Activated naive CD8-positive, alpha-beta T cell treated with anti-CD3 and anti-CD28 coated beads, Interleukin-2, amount 10 ng/mL, durations not matched to agents 7 days and 5 days (primary cell): ENCODE measurements at regions of chr11 and their contacts with region 1.

Region 1: GRCh38 chr11:121464352-121464946 is 11.7 kb upstream of the SORL1-AS1 start:
- DNase-seq: peak; percentile 79
- ATAC-seq: peak; percentile 76
- H3K4me3 Mint-ChIP-seq: peak overlapping the region; percentile 87
- H3K27ac Mint-ChIP-seq: peak overlapping the region; percentile 88
- H3K4me1 Mint-ChIP-seq: peaks cover 88% of the 10 kb centered on the region
- H3K27me3 Mint-ChIP-seq: no peaks in the 10 kb centered on the region

Region 2: DNA sequence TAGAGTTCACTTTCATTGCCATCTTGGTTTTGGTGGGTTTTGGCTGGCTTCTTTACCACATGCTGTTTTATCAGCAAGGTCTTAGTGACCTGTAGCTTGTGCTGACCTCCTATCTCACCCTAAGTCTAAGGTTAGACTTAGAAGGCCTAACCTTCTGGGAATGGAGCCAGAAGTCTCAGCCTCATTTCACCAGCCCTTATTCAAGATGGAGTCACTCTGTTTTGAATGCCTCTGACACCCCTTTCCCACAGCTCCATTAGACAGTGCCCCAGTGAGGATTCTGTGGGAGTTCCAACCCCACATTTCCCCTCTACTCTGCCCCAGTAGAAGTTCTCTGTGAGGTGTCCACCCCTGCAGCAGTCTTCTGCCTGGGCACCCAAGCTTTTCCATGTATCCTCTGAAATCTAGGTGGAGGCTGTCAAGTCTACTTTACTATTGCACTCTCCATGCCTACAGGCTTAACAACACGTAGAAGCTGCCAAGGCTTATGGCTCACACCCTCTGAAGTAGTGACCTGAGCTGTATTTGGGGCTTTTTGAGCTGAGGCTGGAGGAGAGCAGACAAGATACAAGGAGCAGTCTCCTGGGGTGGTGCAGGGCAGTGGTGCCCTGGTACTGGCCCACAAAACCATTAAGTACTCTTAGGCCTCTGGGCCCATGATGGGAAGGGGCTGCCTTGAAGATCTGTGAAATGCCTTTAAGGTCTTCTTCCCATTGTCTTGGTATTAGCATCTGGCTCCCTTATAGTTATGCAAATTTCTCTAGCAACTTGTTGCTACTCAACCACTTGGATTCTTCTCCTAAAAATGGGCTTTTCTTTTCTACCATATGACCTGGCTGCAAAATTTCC is 237.8 kb before region 1 on chr11:
- POLR2A ChIA-PET with region 1: no interaction called
- DNase-seq: no peak
- ATAC-seq: no peak
- H3K4me3 Mint-ChIP-seq: no peak overlapping the region
- H3K27ac Mint-ChIP-seq: no peak overlapping the region
- H3K4me1 Mint-ChIP-seq: no peaks in the 10 kb centered on the region
- H3K27me3 Mint-ChIP-seq: peaks cover 29% of the 10 kb centered on the region

Region 3: DNA sequence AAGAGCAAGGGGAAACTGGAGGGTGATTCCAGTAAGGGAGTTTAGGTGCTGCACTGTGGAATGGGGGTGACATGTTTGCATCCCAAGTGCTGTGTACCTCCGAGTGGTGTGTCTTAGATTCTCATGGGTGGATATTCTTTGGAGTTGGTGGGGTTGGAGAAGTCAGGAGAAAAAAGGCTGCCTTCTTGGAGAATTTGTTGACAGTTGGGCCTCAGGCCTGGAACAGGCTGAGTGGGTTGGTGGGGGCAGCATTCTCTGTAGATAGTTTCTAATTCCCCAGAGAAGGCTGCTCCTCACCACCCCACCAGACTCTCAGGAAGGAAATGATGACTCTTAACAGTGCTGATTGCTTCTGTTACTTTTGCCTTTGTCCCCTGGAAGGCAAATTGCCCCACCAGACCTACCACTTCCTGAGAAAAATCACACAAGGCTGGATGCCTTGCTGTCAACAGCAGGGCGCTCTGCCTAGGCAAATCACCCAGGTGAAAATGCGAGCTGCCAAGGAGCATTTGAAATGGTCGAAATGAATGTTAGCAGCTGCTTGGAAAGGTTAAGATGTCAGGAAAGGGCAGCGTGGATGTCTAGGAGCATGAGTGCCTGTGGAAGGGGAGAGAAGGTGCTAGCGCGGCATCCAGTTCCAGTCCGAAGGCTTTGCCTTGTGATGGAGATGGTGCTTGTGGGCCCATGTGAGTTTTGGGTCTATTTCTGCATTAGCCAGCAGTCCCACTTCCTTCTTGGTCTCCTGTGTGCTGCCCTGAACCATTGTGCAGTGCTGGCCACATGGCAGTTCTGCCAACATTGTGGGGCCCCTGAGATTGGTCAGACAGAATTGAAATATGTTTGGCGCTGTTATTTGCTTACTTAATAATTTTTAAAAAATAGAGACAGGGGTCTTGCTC is 18.0 kb after region 1 on chr11:
- POLR2A ChIA-PET with region 1: interaction called, 79 read pairs
- DNase-seq: peak; percentile 66
- ATAC-seq: peak; percentile 86
- H3K4me3 Mint-ChIP-seq: peak overlapping the region; percentile 87
- H3K27ac Mint-ChIP-seq: peak overlapping the region; percentile 97
- H3K4me1 Mint-ChIP-seq: peaks cover 50% of the 10 kb centered on the region
- H3K27me3 Mint-ChIP-seq: no peaks in the 10 kb centered on the region

Region 4: GRCh38 chr11:121521145-121522042 is 56.9 kb after region 1 on chr11:
- POLR2A ChIA-PET with region 1: no interaction called
- DNase-seq: no peak
- ATAC-seq: no peak
- H3K4me3 Mint-ChIP-seq: peak overlapping the region; percentile 7
- H3K27ac Mint-ChIP-seq: peak overlapping the region; percentile 77
- H3K4me1 Mint-ChIP-seq: peaks cover 30% of the 10 kb centered on the region
- H3K27me3 Mint-ChIP-seq: no peaks in the 10 kb centered on the region